H1 (cell line): ENCODE measurements at regions of chr1 and their contacts with region 1.

Region 1: DNA sequence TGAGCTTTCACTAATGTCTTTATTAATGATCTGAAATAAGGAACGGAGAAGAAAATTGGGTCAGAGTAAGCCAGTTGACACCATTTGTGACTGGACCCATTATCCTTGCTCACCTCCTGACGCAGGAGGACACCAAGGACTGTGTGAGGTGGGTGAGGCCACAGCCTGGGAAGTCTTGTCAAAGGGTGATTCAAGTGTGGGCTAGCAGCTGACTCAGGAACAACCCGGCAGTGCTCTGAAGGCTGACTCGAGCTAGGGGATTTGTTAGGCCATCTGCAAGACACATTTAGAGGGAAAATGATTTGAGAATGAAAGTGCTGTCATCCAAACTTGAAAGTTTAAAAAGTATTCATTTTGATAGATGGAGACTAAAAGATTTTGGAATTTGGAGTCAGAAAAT is 21.2 kb downstream of the PRRX1 start:
- DNase-seq: no peak
- H3K4me3 ChIP-seq: no peak overlapping the region
- H3K27ac ChIP-seq: no peak overlapping the region
- H3K4me1 ChIP-seq: no peaks in the 10 kb centered on the region
- H3K27me3 ChIP-seq: no peaks in the 10 kb centered on the region
- CTCF ChIP-seq: no peak
- EP300 ChIP-seq: no peak
- POLR2A ChIP-seq: no peak
- RAD21 ChIP-seq: no peak

Region 2: GRCh38 chr1:170414989-170415709 is 270.0 kb before region 1 on chr1:
- CTCF ChIA-PET with region 1: no interaction called
- POLR2A ChIA-PET with region 1: no interaction called
- DNase-seq: no peak
- H3K4me3 ChIP-seq: no peak overlapping the region
- H3K27ac ChIP-seq: no peak overlapping the region
- H3K4me1 ChIP-seq: no peaks in the 10 kb centered on the region
- H3K27me3 ChIP-seq: no peaks in the 10 kb centered on the region
- CTCF ChIP-seq: no peak
- EP300 ChIP-seq: no peak
- POLR2A ChIP-seq: no peak
- RAD21 ChIP-seq: no peak

Region 3: GRCh38 chr1:170483051-170483450 is 202.1 kb before region 1 on chr1:
- CTCF ChIA-PET with region 1: no interaction called
- POLR2A ChIA-PET with region 1: no interaction called
- DNase-seq: no peak
- H3K4me3 ChIP-seq: no peak overlapping the region
- H3K27ac ChIP-seq: no peak overlapping the region
- H3K4me1 ChIP-seq: peaks cover 0 to 5% (median 2%) of the 10 kb centered on the region in 4 experiments; a peak in 4 of 7 replicates
- H3K27me3 ChIP-seq: no peaks in the 10 kb centered on the region
- CTCF ChIP-seq: no peak
- EP300 ChIP-seq: no peak
- POLR2A ChIP-seq: no peak
- RAD21 ChIP-seq: no peak

Region 4: DNA sequence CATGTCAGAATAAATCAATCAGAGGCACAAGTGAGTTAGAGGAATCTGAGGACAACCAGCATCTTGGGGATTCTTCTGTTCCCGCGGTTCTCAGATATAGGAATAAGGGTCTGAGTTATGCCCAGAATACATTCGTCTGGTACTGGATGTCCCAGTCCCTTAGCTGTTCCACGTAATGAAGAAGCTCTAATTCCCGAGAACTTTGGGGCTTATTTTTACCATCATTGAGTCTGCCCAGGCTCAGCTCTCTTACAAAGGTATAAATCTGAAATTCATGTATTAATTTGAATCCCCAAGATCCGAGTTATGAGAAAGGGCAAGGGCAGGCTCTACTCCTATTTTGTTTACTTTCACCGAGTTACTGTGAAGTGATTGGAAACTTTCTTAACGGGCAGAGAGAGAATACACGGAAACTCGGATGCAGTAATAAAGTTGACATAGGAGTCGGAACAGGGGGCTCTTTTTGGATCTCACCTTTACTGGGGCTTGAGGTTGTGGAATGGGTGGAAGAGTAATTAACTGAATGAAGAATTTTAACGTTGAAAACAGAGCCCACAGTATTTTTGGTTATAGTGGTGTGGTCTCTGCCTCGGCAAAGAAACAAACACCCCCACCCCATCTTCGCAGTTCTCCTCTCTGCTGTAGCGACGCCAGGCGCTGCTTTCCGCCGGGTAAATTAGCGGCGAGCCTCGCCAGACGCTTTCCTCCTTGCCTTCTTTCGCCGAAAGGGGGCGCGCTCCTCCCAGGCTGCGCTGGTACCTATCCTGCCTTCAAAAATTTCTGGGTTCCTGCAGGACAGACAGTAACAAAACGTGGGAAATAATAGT is 14.2 kb before region 1 on chr1:
- CTCF ChIA-PET with region 1: interaction called, 13 read pairs
- POLR2A ChIA-PET with region 1: interaction called, 3 read pairs
- DNase-seq: peak in 1 of 2 experiments; percentile 96
- H3K4me3 ChIP-seq: peak overlapping the region in 1 of 4 experiments; percentile 41; a peak in 1 of 8 replicates
- H3K27ac ChIP-seq: no peak overlapping the region
- H3K4me1 ChIP-seq: peaks cover 2 to 13% (median 8%) of the 10 kb centered on the region in 4 experiments; a peak in 5 of 7 replicates
- H3K27me3 ChIP-seq: peaks cover 49 to 57% (median 57%) of the 10 kb centered on the region in 4 experiments
- CTCF ChIP-seq: peak; percentile 84 to 88 (median 86)
- EP300 ChIP-seq: no peak
- POLR2A ChIP-seq: no peak
- RAD21 ChIP-seq: peak; percentile 80 to 85

Region 5: GRCh38 chr1:170698301-170699275 is 13.4 kb after region 1 on chr1:
- CTCF ChIA-PET with region 1: interaction called, 48 read pairs
- POLR2A ChIA-PET with region 1: no interaction called
- DNase-seq: no peak
- H3K4me3 ChIP-seq: no peak overlapping the region
- H3K27ac ChIP-seq: no peak overlapping the region
- H3K4me1 ChIP-seq: no peaks in the 10 kb centered on the region
- H3K27me3 ChIP-seq: no peaks in the 10 kb centered on the region
- CTCF ChIP-seq: no peak
- EP300 ChIP-seq: no peak
- POLR2A ChIP-seq: no peak
- RAD21 ChIP-seq: no peak

Region 6: DNA sequence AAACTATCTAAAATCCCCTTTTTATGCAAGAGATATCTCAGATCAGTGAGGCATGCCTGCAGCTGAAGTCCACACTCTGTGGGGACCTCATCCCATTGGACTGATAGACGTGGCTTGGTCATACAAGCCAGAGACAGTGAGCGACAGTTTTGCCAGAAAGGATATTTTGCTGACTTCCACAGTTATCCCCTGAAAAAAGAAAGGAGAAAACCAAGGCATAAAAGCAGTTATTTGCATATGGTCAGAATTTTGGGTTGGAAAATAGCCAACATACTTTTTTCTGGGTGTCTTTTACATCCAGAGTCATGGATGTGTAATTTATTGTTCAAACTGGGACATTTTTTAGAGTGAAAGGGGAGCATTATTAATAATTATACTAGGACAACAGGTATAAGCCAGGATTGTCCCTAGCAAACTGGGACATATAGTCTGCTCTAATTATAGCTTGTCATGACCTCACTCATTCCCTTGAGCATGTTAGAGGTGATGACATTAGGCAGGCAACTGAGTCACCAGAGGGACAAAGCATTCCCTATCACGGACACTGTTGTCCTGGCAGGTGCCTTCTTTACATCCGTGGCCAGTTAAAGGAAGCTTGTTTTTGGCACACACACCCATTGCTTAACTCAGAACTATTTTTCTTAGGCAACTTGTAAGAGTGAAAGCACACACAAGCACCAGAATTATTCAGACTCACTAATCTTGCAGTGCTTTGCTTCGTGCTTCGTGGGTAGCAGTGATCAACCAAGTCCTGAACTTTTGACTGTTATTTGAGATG is 44.2 kb after region 1 on chr1:
- CTCF ChIA-PET with region 1: interaction called, 13 read pairs
- POLR2A ChIA-PET with region 1: no interaction called
- DNase-seq: no peak
- H3K4me3 ChIP-seq: no peak overlapping the region
- H3K27ac ChIP-seq: no peak overlapping the region
- H3K4me1 ChIP-seq: no peaks in the 10 kb centered on the region
- H3K27me3 ChIP-seq: no peaks in the 10 kb centered on the region
- CTCF ChIP-seq: no peak
- EP300 ChIP-seq: no peak
- POLR2A ChIP-seq: no peak
- RAD21 ChIP-seq: no peak

Region 7: DNA sequence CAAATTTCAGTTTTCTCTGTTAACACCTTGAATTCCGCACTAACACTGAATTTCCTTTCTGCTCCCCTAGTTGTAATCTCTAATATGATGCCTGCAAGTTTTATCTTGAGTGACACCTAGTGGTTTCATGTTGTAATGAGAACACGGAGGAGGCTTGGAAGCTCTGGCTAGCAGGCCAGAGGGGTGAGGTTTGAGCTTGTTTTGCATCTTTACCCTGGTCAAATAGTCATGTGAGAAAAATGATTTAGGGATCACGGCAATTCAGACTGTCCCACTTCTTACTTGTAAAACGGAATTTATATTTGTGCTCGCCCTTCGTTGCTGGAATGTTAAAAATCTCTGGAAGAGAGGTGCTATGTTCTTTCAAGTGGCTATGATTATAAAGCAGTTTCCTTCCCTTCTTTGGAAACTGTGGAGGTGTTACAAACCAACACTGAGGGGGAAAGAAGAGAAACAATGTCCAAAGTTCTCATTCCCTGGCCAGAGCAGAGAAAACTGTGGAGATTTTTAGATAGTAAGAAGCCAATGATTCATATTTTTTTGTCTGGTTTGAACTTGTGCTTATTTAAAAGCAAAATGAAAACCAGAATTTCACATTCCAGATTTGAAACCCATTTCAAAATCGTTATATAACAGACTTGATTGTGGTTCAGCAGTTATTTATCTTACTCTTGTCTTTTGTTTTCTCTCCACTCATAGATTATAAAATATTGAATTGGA is 244.8 kb after region 1 on chr1:
- CTCF ChIA-PET with region 1: interaction called, 75 read pairs
- POLR2A ChIA-PET with region 1: no interaction called
- DNase-seq: peak in 1 of 2 experiments; percentile 29
- H3K4me3 ChIP-seq: no peak overlapping the region
- H3K27ac ChIP-seq: no peak overlapping the region
- H3K4me1 ChIP-seq: peaks cover 0 to 4% (median 1%) of the 10 kb centered on the region in 4 experiments; a peak in 2 of 7 replicates
- H3K27me3 ChIP-seq: no peaks in the 10 kb centered on the region
- CTCF ChIP-seq: peak; percentile 19 to 73 (median 67)
- EP300 ChIP-seq: no peak
- POLR2A ChIP-seq: no peak
- RAD21 ChIP-seq: peak; percentile 76 to 81